Lower leg skin (tissue), 4 donors: ENCODE measurements at regions of chr17 and their contacts with region 1.

Region 1: DNA sequence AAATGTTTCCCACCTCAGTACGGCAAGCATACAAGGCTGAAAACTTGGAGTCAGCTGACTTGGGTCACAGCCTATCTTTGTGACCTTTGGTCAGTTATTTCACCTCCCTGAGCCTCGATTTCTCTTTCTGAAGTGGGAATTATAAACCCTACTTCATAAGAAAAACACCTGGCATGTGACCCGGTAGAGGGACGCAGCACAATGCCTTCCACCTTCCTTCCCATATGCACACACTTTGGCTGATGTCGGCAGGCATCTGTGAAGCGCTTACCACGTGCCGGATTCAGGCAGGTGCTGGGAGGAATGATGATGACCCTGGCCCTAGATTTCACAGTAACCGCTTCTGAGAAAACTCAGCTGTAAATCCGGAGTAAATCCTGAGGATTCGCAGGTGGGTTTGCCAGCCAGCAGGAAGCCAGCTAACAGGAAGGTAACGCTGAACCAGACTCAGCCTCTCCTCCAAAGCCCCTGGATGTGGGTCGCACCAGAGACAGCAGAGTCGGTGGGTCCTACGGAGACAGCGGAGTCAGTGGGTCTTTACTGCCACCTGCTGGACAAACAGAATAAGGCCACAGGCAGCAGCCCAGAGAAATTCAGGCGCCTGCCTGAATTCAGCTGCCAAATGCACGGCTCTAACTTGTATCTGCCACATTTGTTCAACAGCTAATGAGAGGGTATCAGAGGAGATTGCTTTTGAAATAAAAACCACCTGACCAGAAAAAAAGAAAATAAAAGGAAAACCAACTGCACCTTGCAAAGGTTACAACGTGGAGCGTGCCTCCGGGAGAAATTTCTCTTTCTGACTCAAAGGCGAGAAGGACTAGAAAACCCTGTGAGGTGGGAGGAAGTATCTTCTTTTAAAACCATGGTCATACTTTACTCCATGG is 16.6 kb downstream of the COPRS start:
- DNase-seq: peak; percentile 37 to 91
- H3K4me3 ChIP-seq: no peak overlapping the region
- CTCF ChIP-seq: peak in 1 of 3 donors; percentile 72
- POLR2A ChIP-seq: no peak

Region 2: DNA sequence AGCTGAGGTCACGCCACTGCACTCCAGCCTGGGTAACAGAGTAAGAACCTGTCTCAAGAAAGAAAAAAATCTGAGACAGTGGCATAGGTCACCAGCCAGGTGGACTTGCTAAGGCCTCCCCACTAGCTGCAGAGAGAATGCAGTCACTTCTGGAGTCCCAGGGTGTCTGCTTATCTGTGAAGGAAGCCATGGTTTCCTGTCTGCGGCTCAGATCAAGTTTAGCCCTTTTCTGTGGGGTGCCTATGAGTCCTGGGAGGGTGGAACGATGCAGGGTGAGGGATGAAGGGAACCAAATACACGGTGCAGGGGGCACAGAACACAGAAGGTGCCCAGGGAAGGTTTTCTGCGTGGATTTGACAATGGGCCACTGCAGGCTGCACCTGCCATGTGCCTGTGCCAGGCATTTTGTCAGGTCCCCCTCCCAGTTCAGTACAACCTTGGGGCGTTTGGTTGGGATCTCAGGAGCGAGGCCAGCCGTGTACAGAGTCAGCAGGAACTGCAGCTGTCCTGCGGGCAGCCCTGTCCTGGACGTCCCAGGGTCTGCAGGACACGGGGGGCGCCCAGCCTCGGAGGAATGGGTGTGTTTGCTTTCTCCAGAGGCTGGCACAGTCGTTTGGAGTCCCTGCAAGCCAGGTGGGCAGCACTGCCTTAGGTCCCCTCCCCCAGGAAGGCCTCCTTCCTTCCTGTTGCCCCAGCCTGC is 409.2 kb before region 1 on chr17:
- intact Hi-C with region 1: loop called (anchors 10 kb)
- DNase-seq: no peak
- H3K4me3 ChIP-seq: no peak overlapping the region
- CTCF ChIP-seq: no peak
- POLR2A ChIP-seq: no peak

Region 3: DNA sequence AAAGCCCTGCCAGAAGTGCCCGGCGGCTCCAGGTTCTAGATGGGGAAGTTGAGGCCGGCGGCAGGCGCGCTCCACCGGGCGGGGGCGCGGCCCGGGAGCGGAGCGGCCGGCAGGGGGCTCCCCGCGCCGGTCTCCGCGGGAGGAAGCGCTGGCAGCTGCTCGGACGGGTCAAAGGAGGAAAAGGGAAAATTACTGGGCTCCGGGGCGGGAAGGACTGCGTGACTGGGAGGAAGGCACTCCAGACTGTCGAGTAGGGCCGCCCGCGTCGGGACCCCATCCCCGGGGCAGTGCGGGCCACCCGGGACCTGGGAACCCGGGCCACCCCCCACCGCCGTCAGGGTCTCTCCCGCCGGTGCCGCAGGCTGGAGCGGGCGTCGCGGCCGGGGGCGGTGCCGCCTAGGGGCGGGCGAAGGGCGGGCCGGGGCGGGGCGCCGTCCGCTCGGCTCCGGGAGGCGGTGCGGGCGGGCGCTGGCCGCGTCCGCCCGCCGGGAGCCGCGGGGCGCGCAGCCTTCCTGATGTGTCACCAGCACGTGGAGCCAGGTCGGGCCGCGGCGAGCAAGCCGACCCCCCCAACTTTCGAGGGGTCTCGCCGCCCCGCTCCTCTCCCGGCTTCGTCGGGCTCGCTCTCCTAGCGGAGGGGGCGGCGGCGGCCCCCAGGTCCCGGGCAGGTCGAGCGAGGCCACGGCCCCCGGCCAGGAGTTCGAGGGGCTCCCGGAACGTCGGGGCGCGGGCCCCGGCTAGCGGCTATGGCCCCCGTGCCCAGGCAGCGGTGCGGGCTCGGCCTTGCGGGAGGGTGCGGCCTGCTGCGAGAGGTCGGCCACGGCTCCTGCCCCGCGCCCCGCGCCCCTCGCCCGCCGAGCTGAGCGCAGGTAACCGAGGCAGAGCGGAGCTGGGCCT is 283.4 kb before region 1 on chr17:
- intact Hi-C with region 1: loop called (anchors 5 kb)
- DNase-seq: peak; percentile 58 to 95
- H3K4me3 ChIP-seq: peak overlapping the region; percentile 42
- CTCF ChIP-seq: peak in 1 of 3 donors; percentile 40
- POLR2A ChIP-seq: peak in 1 of 2 donors; percentile 12